ENCODE measurements at regions of chr1 and their contacts with region 1.

Region 1: DNA sequence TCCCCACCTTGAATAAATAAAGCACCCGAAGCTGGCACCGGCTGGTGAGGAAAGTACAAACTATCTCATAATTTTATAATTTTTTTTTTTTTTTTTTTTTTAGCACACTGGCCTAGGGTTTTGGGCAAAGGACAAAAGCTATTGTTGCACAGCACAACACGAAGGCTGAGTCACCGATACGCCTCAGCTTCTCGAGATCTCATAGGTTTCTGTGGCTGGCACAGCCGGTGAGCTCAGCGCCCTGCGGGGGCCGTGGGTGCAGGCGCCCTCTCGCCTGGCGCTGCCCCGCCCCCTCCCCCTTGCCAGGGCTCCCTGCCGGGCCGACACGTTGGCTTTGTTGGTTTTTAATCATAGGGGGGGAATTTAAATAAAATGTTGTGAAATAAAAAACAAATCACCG is 17.2 kb downstream of the CASZ1 start:
- DNase-seq: peak; percentile 92
- ATAC-seq: peak; percentile 98
- H3K4me3 ChIP-seq: peak overlapping the region; percentile 42; the same call in 1 of the 2 replicates
- H3K27ac ChIP-seq: peak overlapping the region; percentile 80
- H3K4me1 ChIP-seq: peaks cover 26% of the 10 kb centered on the region
- H3K27me3 ChIP-seq: no peaks in the 10 kb centered on the region
- CTCF ChIP-seq: no peak

Region 2: DNA sequence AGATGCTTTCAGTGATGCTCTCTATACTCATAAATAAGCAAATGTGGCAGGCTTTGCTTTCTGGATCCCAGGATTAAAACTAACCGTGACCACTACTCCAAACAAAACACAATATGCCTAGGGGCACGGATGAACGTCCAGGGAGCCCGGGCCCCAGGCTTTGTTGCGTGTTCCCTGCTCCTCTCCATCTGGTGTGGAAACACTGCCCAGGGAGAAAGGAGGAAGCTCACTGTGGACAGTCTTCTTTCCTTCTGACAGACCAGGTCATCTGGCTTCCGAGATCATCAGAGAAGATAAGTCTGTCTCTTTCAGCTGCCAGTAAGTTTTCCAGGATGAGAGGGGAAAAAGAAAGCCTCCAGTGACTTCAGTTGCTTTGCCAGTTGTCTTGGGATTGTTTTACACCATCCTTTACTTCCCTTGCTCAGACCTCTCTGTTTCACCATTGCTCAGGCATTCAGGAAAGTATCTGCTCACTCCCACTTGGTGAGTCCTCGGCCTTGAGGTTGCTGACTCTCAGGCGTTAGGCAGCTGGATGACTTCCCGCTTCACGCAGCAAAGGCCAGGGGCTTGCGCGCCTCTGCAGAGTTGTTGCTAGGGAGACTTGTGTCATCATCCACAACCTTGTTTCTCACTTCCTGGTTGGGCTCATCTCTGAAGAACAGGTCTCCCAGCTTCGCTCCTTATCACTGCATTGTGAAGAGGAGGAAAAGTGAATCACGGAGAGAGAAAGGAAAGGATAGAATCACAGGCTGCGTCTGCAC is 400.9 kb before region 1 on chr1:
- CTCF ChIA-PET with region 1: no interaction called
- POLR2A ChIA-PET with region 1: no interaction called
- intact Hi-C with region 1: no loop called
- DNase-seq: peak; percentile 80
- ATAC-seq: peak; percentile 38
- H3K4me3 ChIP-seq: no peak overlapping the region
- H3K27ac ChIP-seq: peak overlapping the region; percentile 60
- H3K4me1 ChIP-seq: peaks cover 35% of the 10 kb centered on the region
- H3K27me3 ChIP-seq: no peaks in the 10 kb centered on the region
- CTCF ChIP-seq: no peak

Region 3: DNA sequence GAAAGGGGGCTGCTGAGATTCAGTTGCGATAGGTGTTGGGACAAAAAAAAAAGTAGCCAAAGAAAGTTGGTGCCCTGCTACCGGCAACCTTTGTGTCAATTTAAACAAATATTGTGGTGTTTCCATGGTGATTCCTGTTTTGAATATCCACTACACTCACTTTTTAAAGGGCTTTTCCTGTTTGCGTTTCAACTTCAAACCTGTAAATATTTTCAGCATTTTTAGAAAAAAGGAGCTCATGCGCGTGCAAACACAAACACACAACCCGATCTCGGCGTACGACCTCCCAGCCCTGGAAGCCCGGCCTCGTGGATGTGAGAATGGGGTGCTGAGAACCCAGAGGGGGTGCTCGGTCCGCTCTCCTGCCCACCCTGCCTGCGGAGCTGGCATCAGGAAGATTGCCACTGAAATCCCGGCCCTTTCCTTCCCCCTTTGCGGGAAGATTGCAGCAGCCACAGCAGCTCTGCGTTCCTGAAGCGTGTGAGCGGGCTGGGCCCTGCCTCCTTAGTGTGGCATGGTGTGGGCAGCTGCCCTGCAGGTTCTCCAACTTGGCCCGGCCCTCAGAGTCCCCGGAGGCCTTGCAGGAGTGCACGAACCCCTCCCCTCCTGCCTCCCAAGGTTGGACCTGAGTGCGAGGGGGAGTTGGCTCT is 17.6 kb before region 1 on chr1:
- CTCF ChIA-PET with region 1: no interaction called
- POLR2A ChIA-PET with region 1: no interaction called
- intact Hi-C with region 1: loop called (anchors 2 kb)
- DNase-seq: peak; percentile 67
- ATAC-seq: peak; percentile 73
- H3K4me3 ChIP-seq: peak overlapping the region; percentile 51; the same call in 1 of the 2 replicates
- H3K27ac ChIP-seq: peak overlapping the region; percentile 80
- H3K4me1 ChIP-seq: peaks cover 45% of the 10 kb centered on the region
- H3K27me3 ChIP-seq: no peaks in the 10 kb centered on the region
- CTCF ChIP-seq: no peak